ENCODE measurements at regions of chr17 and their contacts with region 1.

Region 1: DNA sequence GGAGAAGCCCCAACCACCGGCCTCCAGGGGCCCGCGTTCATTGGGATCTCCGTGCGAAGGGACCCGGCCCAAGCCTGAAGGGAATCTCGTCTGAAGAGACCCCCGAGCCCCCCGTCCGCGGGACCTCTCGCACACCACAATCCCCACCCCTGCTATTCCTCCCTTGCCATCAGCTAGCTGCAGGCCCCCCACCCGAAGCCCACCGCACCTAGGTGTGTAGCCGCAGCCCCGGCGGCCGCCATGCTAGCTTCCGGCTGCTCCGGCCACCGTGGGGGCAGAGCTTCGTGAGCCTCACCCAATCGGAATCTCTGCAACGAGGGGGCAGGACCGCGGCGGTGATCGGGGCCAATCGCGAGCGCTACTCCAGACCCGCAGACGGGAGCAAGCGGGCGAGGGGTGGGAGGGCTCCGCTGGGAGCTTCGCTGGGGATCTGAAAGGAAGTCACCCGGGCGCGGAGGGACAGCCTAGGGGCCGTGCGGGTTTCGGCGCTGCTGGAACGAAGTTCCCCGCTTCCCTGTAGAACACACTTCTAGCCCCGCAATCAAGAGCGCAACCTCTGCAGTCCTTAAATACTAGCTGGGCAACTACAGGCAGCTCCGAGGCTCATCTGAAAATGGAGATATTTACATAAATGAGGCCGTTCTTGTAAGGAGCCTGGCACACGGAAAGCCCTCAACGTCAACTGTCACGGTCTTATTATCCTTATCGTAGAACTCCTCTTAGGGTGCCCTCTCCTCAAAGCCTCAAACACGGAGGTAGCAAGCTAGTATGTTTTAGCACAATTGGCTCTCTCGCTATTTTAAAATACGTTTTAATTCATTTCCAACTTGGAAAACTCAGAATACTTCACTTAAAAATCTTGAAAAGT is at the start of gene PIGS:
- DNase-seq: peak; percentile 76 to 94
- H3K4me3 ChIP-seq: peak within 1 kb of the TSS; percentile 79 to 94 (median 90)
- H3K27ac ChIP-seq: 0 out of 2 replicates have a peak within 1 kb of the TSS, but pooled peaks have one; percentile 11
- H3K4me1 ChIP-seq: peaks cover 0 to 6% (median 3%) of the 10 kb centered on the region in 4 experiments; a peak in 2 of 7 replicates
- H3K27me3 ChIP-seq: peaks cover 0 to 8% (median 4%) of the 10 kb centered on the region in 4 experiments; a peak in 4 of 7 replicates
- CTCF ChIP-seq: no peak; a peak in 1 of 4 replicates
- EP300 ChIP-seq: no peak
- POLR2A ChIP-seq: peak in 1 of 2 experiments; percentile 73; a peak in 2 of 3 replicates
- RAD21 ChIP-seq: no peak
- total RNA-seq, gene PIGS: 47.4 and 50.6 TPM in 2 replicates

Region 2: DNA sequence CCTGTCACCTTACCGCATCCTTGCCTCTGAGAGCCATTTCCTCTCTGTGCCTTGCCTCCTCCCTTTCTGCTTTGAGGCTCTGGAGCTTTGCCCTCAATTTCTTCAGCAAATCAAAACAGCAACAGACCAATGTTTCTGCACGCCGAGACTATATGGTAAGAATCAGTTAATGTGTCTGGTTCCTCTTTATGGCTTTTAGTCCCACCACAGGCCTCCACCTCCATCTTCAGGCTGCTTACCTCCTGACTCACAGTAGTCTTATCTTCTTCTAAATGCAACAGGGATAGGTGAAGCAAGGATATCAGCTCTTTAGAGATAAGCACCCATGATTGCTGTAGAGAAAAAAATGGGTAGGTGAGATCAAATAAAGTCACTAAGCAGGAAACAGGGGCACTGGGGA is 14.4 kb after region 1 on chr17:
- CTCF ChIA-PET with region 1: interaction called, 6 read pairs
- POLR2A ChIA-PET with region 1: interaction called, 20 read pairs
- DNase-seq: no peak
- H3K4me3 ChIP-seq: no peak overlapping the region
- H3K27ac ChIP-seq: no peak overlapping the region
- H3K4me1 ChIP-seq: no peaks in the 10 kb centered on the region
- H3K27me3 ChIP-seq: no peaks in the 10 kb centered on the region
- CTCF ChIP-seq: no peak
- EP300 ChIP-seq: no peak
- POLR2A ChIP-seq: no peak
- RAD21 ChIP-seq: no peak

Measured in H1 (cell line).